Colonic mucosa (tissue), 4 donors: ENCODE measurements at regions of chr5 and their contacts with region 1.

Region 1: DNA sequence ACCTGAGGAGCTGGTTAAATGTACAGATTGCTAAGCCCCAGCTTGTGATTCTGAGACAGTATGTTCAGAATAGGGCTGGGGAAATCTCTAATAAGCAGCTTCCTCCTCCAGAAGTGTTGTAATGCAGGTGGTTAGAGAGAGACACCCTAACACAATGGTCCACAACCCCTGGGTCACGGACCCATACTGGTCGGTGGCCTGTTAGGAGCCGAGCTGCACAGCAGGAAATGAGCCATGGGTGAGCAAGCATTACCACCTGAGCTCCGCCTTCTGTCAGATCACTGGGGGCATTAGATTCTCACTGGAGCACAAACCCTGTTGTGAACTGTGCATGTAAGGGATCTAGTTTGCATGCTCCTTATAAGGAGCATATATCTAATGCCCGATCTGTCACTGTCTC is 61.8 kb downstream of the SLC36A1 start:
- DNase-seq: no peak
- H3K4me3 ChIP-seq: no peak overlapping the region
- H3K27ac ChIP-seq: no peak overlapping the region
- H3K4me1 ChIP-seq: no peaks in the 10 kb centered on the region
- H3K27me3 ChIP-seq: no peaks in the 10 kb centered on the region
- CTCF ChIP-seq: no peak

Region 2: DNA sequence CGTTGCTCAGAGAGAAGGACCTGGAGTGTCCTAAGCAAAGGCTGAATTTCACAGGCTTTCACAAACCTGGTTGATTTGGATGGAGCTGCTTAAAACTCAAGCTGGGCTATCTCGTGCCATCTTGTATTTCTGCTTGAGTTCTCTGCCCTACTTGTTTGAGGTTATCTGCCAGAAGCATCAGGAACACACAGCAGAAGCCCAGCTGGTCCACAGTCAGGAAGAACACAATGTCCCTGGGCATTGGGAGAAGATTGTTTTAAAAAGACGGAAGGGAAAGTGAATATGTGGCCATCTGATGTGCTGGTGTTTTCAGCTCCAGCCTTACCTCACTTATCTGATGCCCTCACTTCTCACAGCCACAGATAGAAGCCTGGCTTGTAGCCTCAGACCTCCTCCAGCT is 94.7 kb before region 1 on chr5:
- intact Hi-C with region 1: no loop called
- DNase-seq: no peak
- H3K4me3 ChIP-seq: no peak overlapping the region
- H3K27ac ChIP-seq: no peak overlapping the region
- H3K4me1 ChIP-seq: no peaks in the 10 kb centered on the region
- H3K27me3 ChIP-seq: no peaks in the 10 kb centered on the region
- CTCF ChIP-seq: no peak

Region 3: DNA sequence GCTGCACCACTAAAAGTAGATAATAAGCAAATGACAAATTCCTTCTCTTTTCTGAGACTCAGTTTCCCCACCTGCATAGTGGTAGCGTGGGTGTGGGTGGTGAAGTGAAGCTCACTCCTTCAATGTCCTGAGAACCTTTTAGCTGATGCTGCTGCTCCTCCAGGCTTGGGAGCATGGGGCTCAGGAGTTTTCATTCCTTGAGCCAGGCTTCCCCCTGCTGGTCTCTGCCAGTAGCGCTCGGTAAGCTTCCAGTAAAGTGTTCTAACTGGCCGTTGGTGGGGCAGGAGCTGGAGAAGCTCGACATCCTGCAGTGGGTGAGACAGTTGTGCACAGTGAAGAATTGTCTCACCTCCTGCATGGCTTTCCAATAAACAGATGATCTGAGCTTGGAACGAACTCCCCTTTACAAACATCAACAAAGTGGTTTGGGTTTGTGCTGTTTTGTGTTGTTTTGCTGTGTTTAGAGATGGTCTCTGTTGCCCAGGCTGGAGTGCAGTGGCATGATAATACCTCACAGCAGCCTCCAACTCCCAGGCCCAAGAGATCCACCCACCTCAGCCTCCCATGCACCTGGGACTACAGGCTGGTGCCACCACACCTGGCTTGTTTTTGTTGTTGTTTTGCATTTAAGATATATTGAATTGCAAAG is 142.9 kb after region 1 on chr5:
- intact Hi-C with region 1: loop called (anchors 10 kb)
- DNase-seq: peak; percentile 80
- H3K4me3 ChIP-seq: no peak overlapping the region
- H3K27ac ChIP-seq: no peak overlapping the region
- H3K4me1 ChIP-seq: no peaks in the 10 kb centered on the region
- H3K27me3 ChIP-seq: no peaks in the 10 kb centered on the region
- CTCF ChIP-seq: peak; percentile 79